Activated T-helper 1 cell treated with anti-CD3 and anti-CD28 coated beads, Interleukin-12 subunit alpha, Interleukin-12 subunit beta, Interleukin-2, Interleukin-4 antibody, amounts not matched to agents 30 ng/mL and 10 ng/mL and 1 ng/mL, durations not matched to agents 14 hours and 24 hours and 36 hours (primary cell): ENCODE measurements at regions of chr16 and their contacts with region 1.

Region 1: DNA sequence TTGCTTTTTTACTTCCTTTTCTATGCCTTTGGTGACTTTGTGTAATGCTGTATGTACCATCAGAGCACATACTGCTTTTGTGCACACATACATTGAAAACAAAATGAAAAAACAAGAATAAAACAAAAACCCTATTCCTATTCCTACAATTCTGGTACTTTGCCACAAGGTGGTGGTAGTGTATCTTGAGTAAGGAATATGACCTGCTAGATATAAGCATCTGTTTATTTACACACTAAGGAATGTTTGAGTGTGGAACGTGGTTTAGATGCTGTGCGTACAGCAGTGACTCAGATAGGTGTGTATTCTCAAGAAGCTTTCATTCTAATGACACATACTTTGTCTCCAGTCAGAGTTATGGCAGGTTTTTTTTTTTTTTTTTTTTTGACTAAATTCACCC is 606.2 kb downstream of the WWOX start:
- DNase-seq: peak; percentile 2
- H3K4me3 Mint-ChIP-seq: no peak overlapping the region
- H3K27ac Mint-ChIP-seq: no peak overlapping the region
- H3K4me1 Mint-ChIP-seq: peaks cover 14% of the 10 kb centered on the region
- H3K27me3 Mint-ChIP-seq: peaks cover 2% of the 10 kb centered on the region

Region 2: DNA sequence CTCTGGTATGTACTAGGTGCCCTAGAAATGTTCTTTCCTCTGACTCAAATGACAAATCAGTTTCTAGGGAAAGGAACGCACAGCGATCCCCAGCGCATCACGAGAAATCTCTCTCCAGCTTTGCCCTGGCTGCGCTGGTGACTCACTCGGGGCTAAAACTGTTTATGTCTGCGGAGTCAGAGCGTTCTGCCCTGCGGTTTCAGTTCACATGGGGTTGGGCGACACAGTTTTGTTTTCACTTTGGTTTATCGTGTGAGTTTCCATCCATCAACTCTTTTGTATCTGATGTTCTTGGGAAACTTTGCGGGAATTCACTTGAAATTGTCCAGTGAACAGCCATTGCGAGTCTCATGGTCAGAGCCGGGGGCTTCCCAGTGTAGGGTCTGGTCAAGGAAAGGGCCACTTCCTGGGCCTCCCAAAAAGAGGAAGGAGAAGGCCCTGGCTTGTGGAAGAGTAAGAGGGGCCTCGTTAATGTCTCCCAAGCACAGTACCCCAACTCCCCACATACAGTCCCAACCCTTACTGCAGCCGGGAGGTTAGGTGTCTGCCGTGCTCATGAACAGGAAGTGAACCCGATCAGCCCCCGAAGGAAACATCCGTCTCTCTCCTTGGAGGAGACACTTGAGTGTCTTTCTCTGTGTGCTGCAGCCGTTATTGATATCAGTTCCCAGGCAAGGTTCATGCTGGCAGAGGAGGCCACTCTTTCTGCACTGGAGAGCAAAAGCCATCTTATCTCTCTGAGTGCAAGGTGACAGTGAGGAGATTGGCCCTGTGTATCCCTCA is 37.0 kb after region 1 on chr16:
- intact Hi-C with region 1: loop called (anchors 1 kb)
- DNase-seq: peak; percentile 70
- H3K4me3 Mint-ChIP-seq: peak overlapping the region; percentile 74
- H3K27ac Mint-ChIP-seq: peak overlapping the region; percentile 77
- H3K4me1 Mint-ChIP-seq: peaks cover 33% of the 10 kb centered on the region
- H3K27me3 Mint-ChIP-seq: peaks cover 10% of the 10 kb centered on the region

Region 3: DNA sequence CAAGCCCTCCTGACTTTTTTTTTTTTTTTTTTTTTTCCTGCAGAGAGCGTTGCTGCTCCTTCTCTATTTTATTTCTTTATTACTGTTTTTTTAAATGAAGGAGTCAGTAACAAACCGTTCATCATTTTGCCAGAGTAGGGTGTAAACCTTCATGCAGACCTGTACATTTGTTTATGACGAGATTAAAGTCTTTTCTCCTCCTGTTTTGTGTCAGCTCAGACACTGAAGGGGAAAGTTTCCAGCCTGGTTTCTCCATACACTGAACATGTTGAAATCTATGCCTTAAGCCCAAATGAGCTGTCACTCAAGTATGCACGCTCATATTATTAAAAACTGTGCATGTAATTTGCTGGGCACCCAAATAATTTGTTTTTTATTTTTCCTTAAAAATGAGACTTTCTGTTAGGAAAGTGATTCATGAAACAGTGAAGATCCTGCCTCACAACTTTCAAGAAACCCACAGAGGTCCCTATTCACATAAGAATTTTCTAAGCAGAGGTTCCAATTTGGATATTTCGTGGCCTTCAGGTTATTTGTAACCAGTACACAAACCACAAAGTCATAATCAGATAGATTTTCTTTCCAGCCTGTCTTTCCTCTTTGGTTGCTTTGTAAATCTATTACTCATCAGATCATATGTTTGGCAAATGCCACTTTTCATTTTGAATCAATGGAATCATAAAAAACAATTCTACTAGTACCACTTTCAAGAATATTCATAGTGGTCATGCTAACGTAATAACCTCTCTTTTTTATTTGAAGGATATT is 194.5 kb after region 1 on chr16:
- intact Hi-C with region 1: loop called (anchors 2 kb)
- DNase-seq: no peak
- H3K4me3 Mint-ChIP-seq: no peak overlapping the region
- H3K27ac Mint-ChIP-seq: peak overlapping the region; percentile 51
- H3K4me1 Mint-ChIP-seq: peaks cover 42% of the 10 kb centered on the region
- H3K27me3 Mint-ChIP-seq: no peaks in the 10 kb centered on the region

Region 4: DNA sequence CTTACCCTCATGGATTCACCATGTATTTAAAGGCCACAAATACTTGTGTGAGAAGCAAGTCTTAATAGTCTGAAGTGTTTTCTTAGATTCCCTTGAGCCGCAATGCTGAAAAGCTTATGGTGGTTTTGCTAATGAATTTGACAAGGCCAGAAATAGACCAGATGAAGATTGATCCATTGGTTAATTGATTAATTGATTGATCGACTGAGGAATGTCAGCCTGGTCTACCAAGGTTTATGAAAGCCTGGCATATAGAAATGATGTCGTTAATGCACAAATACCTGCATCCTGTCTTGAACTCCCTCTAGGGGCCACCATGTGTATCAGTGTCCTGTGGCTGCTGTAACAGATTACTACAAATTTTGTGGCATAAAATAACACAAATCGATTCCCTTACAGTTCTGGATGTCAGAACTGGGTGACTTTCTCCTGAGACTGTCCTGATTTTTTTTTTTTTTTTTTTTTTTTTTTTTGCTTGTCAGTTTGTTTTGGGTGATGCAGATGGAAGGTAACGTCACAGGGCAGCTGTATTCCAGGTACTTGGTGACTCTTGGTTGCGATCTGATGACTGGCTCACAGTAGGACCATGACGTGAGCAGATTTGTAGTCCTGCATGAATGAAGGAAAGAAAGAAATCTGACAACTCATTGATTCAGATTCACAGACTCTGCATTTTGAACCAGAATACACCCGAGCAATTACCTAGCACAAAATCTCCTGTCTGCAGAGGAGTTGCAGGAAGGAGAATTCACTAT is 341.7 kb after region 1 on chr16:
- intact Hi-C with region 1: loop called (anchors 1 kb)
- DNase-seq: no peak
- H3K4me3 Mint-ChIP-seq: no peak overlapping the region
- H3K27ac Mint-ChIP-seq: no peak overlapping the region
- H3K4me1 Mint-ChIP-seq: peaks cover 33% of the 10 kb centered on the region
- H3K27me3 Mint-ChIP-seq: no peaks in the 10 kb centered on the region

Region 5: DNA sequence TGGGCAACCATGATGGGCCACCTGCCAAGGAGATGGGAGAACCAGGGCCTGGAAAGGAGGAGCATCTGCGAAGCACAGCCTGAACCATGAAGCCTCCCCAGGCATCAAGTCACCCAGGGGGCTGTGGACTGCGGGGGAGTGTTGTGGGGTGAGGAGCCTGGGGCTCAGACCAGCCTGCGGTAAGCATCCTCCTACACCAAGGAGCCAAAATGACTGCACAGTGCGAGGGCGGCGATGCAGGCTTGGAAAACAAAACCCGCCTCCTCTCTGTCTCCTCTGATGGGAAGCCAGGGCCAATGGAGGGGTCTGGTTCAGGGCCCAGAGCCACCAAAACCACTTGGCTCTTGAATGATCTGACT is 913.0 kb after region 1 on chr16:
- intact Hi-C with region 1: loop called (anchors 5 kb)
- DNase-seq: peak; percentile 37
- H3K4me3 Mint-ChIP-seq: peak overlapping the region; percentile 46
- H3K27ac Mint-ChIP-seq: peak overlapping the region; percentile 91
- H3K4me1 Mint-ChIP-seq: peaks cover 75% of the 10 kb centered on the region
- H3K27me3 Mint-ChIP-seq: peaks cover 6% of the 10 kb centered on the region

Region 6: DNA sequence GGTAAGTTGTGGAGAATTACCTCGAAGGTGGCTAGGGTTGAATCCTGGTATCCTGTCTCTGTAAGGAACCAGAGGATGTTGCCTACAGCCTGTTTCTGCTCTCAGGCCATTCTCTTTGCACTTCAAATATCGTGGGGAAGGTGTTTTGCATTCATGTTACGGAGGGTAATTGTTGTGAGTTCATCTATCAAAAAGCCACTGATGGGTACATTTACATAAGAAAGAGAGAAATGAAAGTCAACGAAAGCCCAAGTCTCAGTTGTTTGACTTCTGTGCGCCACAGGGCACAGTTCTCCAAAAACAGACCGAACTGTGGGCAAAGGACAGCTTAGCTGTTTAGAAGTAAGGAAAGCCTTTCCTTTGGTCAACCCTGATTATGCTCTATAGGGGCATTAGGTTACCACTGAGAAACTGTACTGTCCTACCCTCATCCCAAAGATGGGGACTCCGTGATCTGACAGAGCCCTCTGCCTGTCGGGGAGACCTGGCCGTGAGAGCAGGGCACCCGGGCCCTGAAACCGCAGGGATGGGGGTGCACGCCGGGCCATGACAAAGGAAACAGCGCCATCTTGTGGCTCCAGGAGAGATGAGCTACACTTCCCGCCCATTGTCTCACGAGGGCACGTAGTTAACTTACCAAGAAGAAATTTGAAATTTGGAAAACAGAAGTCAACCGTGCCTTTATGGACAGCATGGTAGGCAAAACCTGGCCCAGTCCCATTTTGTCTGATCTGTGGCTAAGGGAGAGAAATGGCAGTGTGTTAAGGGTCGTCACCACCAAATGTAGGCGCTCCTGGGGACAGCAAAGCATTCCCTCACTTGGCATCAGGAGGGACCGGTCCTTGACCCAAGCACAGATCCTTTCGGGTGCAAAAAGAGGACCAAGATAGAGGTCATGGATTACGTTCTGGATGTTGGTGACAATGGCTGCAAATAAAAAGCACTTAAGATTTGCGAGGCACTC is 1760.6 kb after region 1 on chr16:
- intact Hi-C with region 1: loop called (anchors 2 kb)
- DNase-seq: peak; percentile 40
- H3K4me3 Mint-ChIP-seq: no peak overlapping the region
- H3K27ac Mint-ChIP-seq: no peak overlapping the region
- H3K4me1 Mint-ChIP-seq: no peaks in the 10 kb centered on the region
- H3K27me3 Mint-ChIP-seq: peaks cover 10% of the 10 kb centered on the region